ENCODE measurements at regions of chr1 and their contacts with region 1.

Region 1: DNA sequence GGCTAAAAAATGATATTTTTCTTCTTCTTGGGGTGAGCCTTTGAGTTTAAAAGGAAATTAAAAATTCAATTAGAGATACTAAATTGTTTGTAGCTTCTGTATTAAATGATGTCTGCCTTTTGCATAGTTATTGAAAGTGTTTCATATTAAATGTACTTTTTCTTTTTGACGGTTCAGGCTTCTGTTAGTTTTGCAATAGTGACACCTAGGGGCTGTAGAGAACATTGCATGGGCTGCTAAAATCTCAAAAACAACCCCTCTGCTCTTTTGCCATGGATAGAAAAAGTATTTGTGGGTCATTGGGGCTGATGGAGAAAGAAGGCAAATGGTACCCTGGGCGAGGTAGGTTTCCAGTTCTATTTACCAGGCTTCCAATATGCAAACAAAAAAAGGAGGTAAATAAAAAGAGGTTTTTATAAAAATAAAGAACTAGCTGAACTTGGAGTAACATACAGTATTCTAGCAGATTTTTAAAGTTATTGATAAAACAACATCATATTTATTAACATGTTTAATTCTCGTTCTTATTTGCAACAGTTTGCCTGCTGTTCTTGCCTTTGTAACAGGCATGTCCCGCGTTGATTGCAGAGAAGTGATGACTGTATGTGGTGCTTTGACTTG is 115.4 kb upstream of the HOOK1 start:
- DNase-seq: no peak
- ATAC-seq: peak; percentile 40 to 56
- H3K4me3 ChIP-seq: peak overlapping the region in 1 of 4 donors; percentile 12
- H3K27ac ChIP-seq: peak overlapping the region; percentile 71 to 77 (median 74)
- H3K4me1 ChIP-seq: peaks cover 53 to 59% of the 10 kb centered on the region in 2 donors
- H3K27me3 ChIP-seq: no peaks in the 10 kb centered on the region
- CTCF ChIP-seq: peak; percentile 86 to 97 (median 93)
- POLR2A ChIP-seq: no peak

Region 2: GRCh38 chr1:58739856-58740466 is 959.4 kb before region 1 on chr1:
- in situ Hi-C with region 1: no loop called
- intact Hi-C with region 1: loop called (anchors 1 kb)
- DNase-seq: no peak
- ATAC-seq: peak in 1 of 2 donors; percentile 79
- H3K4me3 ChIP-seq: no peak overlapping the region
- H3K27ac ChIP-seq: no peak overlapping the region
- H3K4me1 ChIP-seq: peaks cover 6% of the 10 kb centered on the region in 2 donors
- H3K27me3 ChIP-seq: no peaks in the 10 kb centered on the region
- CTCF ChIP-seq: peak; percentile 78 to 95 (median 83)
- POLR2A ChIP-seq: no peak

Region 3: DNA sequence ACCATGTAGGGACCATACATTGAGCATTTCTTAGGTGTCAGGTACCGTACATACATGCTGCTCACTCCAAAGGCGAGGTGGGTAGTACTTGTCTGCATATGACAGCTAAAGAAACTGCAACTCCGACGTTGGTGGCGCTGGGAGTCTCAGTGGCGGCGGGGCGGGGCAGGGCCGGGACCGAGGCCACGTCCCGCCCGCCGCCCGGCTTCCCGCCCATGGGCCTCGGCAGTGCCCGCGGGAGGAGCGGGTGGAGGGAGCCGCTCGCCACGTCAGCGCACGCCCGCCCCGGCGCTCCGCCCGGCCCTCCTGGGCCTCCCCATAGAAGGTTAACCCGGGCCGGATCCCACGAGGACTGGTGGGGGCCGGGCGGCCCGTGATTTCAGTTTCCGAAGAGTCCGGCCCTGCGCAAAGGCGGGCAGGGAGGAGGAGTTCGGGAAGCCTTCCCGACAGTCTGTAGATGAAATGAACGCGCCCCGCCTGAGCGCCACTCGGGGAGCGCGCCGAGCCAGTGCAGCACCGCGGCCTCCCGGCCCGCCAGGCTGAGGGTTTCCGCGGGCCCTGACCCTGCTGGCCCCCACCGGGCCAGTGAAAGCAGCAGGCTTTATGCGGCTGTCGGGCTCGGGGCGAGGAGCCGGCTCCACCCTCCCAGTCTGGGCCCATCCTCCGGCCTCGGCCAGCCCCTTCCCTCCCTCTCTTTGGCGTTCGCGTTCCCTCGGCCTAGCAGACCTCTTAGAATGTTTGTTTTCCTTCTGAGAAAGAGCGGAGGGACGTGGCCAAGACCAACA is 795.6 kb before region 1 on chr1:
- in situ Hi-C with region 1: no loop called
- intact Hi-C with region 1: loop called (anchors 5 kb)
- DNase-seq: peak; percentile 86 to 93
- ATAC-seq: peak; percentile 69 to 81
- H3K4me3 ChIP-seq: peak overlapping the region; percentile 53 to 82 (median 60)
- H3K27ac ChIP-seq: peak overlapping the region; percentile 94 to 100 (median 94)
- H3K4me1 ChIP-seq: peaks cover 52 to 54% of the 10 kb centered on the region in 2 donors
- H3K27me3 ChIP-seq: no peaks in the 10 kb centered on the region
- CTCF ChIP-seq: no peak
- POLR2A ChIP-seq: peak; percentile 82 to 91

Region 4: GRCh38 chr1:59393211-59394180 is 305.8 kb before region 1 on chr1:
- in situ Hi-C with region 1: no loop called
- intact Hi-C with region 1: loop called (anchors 2 kb)
- DNase-seq: peak; percentile 87 to 95
- ATAC-seq: peak; percentile 93 to 94
- H3K4me3 ChIP-seq: peak overlapping the region; percentile 3 to 24 (median 21)
- H3K27ac ChIP-seq: peak overlapping the region; percentile 89 to 95 (median 92)
- H3K4me1 ChIP-seq: peaks cover 64 to 67% of the 10 kb centered on the region in 2 donors
- H3K27me3 ChIP-seq: no peaks in the 10 kb centered on the region
- CTCF ChIP-seq: no peak
- POLR2A ChIP-seq: no peak

Region 5: GRCh38 chr1:59432531-59433439 is 266.6 kb before region 1 on chr1:
- in situ Hi-C with region 1: loop called in 1 of 4 experiments (anchors 25 kb)
- intact Hi-C with region 1: loop called (anchors 5 kb)
- DNase-seq: no peak
- ATAC-seq: no peak
- H3K4me3 ChIP-seq: no peak overlapping the region
- H3K27ac ChIP-seq: peak overlapping the region; percentile 13 to 61 (median 54)
- H3K4me1 ChIP-seq: peaks cover 78 to 85% of the 10 kb centered on the region in 2 donors
- H3K27me3 ChIP-seq: no peaks in the 10 kb centered on the region
- CTCF ChIP-seq: no peak
- POLR2A ChIP-seq: no peak

Region 6: GRCh38 chr1:59506952-59507351 is 192.4 kb before region 1 on chr1:
- in situ Hi-C with region 1: loop called in 3 of 4 experiments (anchors 25 kb)
- intact Hi-C with region 1: no loop called
- DNase-seq: peak; percentile 61 to 81
- ATAC-seq: peak; percentile 97 to 98
- H3K4me3 ChIP-seq: peak overlapping the region; percentile 8 to 37 (median 24)
- H3K27ac ChIP-seq: peak overlapping the region; percentile 45 to 72 (median 66)
- H3K4me1 ChIP-seq: peaks cover 24 to 29% of the 10 kb centered on the region in 2 donors
- H3K27me3 ChIP-seq: no peaks in the 10 kb centered on the region
- CTCF ChIP-seq: no peak
- POLR2A ChIP-seq: no peak

Region 7: DNA sequence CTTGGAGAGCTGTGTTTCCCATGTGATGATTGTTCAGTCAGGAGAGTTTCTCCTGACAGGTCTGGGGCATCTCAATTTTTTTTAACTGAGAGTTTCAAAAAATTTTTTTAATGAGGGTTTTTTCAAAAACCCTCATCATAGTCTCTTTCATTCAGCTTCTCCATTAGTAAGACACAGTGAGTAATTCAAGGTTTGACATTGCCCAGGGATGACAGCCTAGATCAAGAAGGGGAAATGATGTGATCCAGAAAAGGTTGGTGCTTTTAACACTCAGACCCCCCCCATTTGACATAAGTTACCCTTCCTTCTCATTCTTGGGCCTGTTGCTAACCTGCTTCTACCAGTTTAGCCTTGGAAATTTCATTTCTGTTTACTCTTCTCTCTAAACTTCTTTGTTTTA is 74.0 kb before region 1 on chr1:
- in situ Hi-C with region 1: no loop called
- intact Hi-C with region 1: no loop called
- DNase-seq: no peak
- ATAC-seq: no peak
- H3K4me3 ChIP-seq: no peak overlapping the region
- H3K27ac ChIP-seq: no peak overlapping the region
- H3K4me1 ChIP-seq: no peaks in the 10 kb centered on the region
- H3K27me3 ChIP-seq: no peaks in the 10 kb centered on the region
- CTCF ChIP-seq: no peak
- POLR2A ChIP-seq: no peak

Region 8: GRCh38 chr1:59779949-59780348 is 80.6 kb after region 1 on chr1:
- in situ Hi-C with region 1: no loop called
- intact Hi-C with region 1: no loop called
- DNase-seq: no peak
- ATAC-seq: no peak
- H3K4me3 ChIP-seq: no peak overlapping the region
- H3K27ac ChIP-seq: no peak overlapping the region
- H3K4me1 ChIP-seq: no peaks in the 10 kb centered on the region
- H3K27me3 ChIP-seq: no peaks in the 10 kb centered on the region
- CTCF ChIP-seq: no peak
- POLR2A ChIP-seq: no peak

Region 9: GRCh38 chr1:59827055-59827643 is 127.8 kb after region 1 on chr1:
- in situ Hi-C with region 1: no loop called
- intact Hi-C with region 1: no loop called
- DNase-seq: no peak
- ATAC-seq: no peak
- H3K4me3 ChIP-seq: no peak overlapping the region
- H3K27ac ChIP-seq: no peak overlapping the region
- H3K4me1 ChIP-seq: no peaks in the 10 kb centered on the region
- H3K27me3 ChIP-seq: no peaks in the 10 kb centered on the region
- CTCF ChIP-seq: no peak
- POLR2A ChIP-seq: no peak

Measured in gastrocnemius medialis (tissue), 4 donors.